Activated T-helper 1 cell treated with anti-CD3 and anti-CD28 coated beads, Interleukin-12 subunit alpha, Interleukin-12 subunit beta, Interleukin-2, Interleukin-4 antibody, amounts not matched to agents 30 ng/mL and 10 ng/mL and 1 ng/mL, durations not matched to agents 14 hours and 24 hours and 36 hours (primary cell): ENCODE measurements at regions of chr2 and their contacts with region 1.

Region 1: DNA sequence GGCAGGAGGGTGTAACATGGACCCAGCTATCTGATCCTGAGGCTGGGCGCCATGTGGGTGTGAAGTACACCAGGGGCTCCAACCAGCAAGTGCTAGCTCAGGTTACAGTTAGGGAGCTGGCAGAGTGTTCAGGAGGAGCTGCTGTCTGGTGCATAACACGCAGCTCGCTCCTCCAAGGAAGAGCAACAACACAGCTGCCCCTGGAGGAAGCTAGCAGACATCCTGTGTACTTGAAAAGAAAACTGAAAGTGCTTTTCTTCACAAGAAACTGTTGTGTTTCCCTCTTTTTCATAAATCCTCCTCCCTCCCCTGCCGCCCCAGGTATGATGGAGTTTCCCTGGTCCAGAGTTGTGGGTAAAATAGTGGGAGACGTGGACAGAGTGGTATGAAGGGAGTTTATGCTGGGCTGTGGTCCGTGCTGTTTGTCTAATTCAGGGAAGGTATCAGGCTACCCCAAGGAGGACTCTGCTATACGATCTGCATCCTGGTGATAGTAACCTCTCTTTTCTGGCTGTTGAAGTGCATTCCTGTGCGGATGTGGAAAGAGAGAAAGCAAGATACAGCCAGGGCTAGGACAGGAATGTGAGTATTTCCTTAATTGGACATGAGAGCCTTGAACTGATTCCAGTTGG is 6.1 kb upstream of the LBH start:
- DNase-seq: peak; percentile 48
- H3K4me3 Mint-ChIP-seq: peak overlapping the region; percentile 91
- H3K27ac Mint-ChIP-seq: peak overlapping the region; percentile 97
- H3K4me1 Mint-ChIP-seq: peaks cover 77% of the 10 kb centered on the region
- H3K27me3 Mint-ChIP-seq: peaks cover 5% of the 10 kb centered on the region

Region 2: DNA sequence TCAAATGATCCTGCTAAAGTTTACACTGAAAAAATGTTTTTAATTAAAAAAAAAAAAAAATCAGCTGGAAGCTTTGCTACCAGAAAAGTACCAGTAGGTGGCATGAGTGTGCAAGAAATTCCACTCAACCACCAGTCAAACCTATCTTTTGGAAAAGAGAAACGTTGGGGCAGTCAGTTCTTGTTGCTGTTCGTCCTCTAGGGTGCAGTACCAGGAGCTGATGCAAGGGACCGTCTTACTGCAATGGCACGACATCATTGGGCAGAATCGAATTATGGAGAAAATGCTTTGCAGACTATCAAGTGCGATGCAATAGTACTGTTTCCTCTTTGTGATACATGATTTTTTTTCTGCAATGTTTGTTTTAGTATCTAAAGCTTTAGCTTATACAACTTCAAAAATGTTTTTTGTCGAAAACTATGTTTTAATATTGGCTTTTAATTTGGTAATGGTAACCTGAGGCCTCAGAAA is 60.2 kb before region 1 on chr2:
- intact Hi-C with region 1: loop called (anchors 2 kb)
- DNase-seq: peak; percentile 62
- H3K4me3 Mint-ChIP-seq: no peak overlapping the region
- H3K27ac Mint-ChIP-seq: no peak overlapping the region
- H3K4me1 Mint-ChIP-seq: peaks cover 5% of the 10 kb centered on the region
- H3K27me3 Mint-ChIP-seq: peaks cover 3% of the 10 kb centered on the region

Region 3: DNA sequence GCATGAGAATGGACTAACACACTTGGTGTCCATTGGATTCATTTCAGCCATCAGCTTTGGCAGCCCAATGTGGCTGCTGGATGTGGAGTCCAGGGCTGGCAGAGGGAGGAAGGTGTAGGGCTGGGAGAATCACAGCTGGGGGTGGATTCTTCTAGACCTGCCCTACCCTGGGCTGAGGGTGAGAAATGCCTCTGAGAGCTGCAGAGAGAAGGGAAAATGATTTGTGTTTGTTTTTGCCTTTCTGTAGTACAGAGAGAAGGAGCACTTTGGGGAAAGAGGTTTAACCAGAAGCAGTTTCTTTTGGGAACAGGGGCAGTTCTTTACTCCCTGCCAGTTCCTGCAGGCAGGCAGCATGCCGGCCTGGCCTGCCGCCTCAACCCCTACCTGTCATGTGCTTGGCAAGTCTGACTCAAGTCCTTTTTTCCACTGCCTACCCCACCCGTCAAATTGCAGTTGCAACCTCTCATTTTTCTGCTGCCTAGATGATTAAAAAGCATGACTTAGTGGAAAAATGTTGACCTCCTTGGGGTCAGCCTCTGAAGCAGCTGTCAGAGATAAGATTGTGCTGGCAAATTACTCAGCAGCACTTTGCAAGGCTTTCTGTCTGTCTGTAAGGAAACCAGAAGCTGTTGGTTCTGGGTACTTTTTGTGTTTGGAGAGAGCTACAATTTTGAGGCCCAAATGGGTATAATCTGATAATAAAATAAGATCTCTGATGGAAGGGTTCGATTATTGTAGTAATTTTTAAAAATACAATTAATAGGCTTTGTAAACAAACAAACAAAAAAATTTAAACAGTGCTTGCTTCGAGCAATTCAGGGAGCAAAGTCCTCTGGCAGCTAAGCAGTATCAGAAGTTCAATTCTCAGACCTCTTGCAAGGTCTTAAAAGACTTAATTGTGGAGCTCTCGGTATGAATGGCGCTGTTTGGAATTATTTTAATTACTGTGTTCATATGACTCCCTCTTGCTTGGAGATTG is 27.8 kb after region 1 on chr2:
- intact Hi-C with region 1: loop called (anchors 1 kb)
- DNase-seq: peak; percentile 48
- H3K4me3 Mint-ChIP-seq: peak overlapping the region; percentile 53
- H3K27ac Mint-ChIP-seq: peak overlapping the region; percentile 93
- H3K4me1 Mint-ChIP-seq: peaks cover 92% of the 10 kb centered on the region
- H3K27me3 Mint-ChIP-seq: no peaks in the 10 kb centered on the region

Region 4: GRCh38 chr2:30273261-30273861 is 48.1 kb after region 1 on chr2:
- intact Hi-C with region 1: loop called (anchors 1 kb)
- DNase-seq: no peak
- H3K4me3 Mint-ChIP-seq: peak overlapping the region; percentile 56
- H3K27ac Mint-ChIP-seq: peak overlapping the region; percentile 97
- H3K4me1 Mint-ChIP-seq: peaks cover 71% of the 10 kb centered on the region
- H3K27me3 Mint-ChIP-seq: peaks cover 4% of the 10 kb centered on the region

Region 5: GRCh38 chr2:31324000-31324633 is 1098.9 kb after region 1 on chr2:
- intact Hi-C with region 1: loop called (anchors 2 kb)
- DNase-seq: no peak
- H3K4me3 Mint-ChIP-seq: peak overlapping the region; percentile 56
- H3K27ac Mint-ChIP-seq: peak overlapping the region; percentile 66
- H3K4me1 Mint-ChIP-seq: peaks cover 52% of the 10 kb centered on the region
- H3K27me3 Mint-ChIP-seq: peaks cover 6% of the 10 kb centered on the region